ENCODE measurements at regions of chr15 and their contacts with region 1.

Region 1: DNA sequence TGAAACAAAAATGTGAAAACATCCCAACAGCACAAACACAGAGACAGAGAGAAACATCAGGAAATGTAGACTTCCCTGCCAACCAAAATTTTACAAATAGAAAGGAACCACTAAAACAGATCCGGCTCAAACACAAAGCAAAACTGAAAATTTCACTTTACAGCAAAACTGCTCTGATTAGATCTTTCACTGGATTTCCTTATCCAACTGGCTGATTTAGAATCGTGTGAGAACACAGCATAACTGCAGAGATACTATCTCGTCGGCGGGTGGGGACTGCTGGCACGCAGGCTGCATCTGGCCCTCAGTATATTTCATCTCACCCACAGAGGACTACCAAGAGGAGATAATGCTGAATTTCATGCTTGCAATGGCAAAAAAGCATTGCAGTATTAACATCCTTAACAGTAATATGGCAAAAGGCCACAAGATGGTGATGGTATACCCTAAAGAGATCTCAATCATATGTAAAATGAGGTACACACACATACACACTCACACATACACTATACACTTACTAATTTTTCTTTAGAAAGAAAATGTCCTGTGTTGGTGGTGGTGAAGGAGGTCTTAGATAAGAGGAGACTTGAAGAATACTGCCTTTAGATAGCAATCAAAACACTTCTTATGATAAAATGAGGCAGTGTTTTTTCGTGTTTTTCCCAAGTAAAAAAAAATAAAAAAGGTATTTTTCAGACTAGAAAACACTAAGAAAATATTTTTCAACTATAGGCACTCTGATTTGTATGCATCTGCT is 10.6 kb upstream of the LEO1 start:
- DNase-seq: peak; percentile 61 to 72 (median 66)
- H3K4me3 ChIP-seq: no peak overlapping the region
- H3K4me3 Mint-ChIP-seq: peak overlapping the region; percentile 69 to 87 (median 80)
- H3K27ac ChIP-seq: no peak overlapping the region
- H3K27ac Mint-ChIP-seq: peak overlapping the region; percentile 15 to 94 (median 83)
- H3K4me1 ChIP-seq: peaks cover 13% of the 10 kb centered on the region
- H3K4me1 Mint-ChIP-seq: peaks cover 9 to 10% (median 10%) of the 10 kb centered on the region in 4 donors
- H3K27me3 ChIP-seq: no peaks in the 10 kb centered on the region
- H3K27me3 Mint-ChIP-seq: no peaks in the 10 kb centered on the region

Region 2: GRCh38 chr15:51971375-51972133 is 10.6 kb before region 1 on chr15 and contains the start of gene LEO1:
- CTCF ChIA-PET with region 1: interaction called, 7 read pairs
- POLR2A ChIA-PET with region 1: interaction called, 23 read pairs
- intact Hi-C with region 1: loop called (anchors 1 kb)
- DNase-seq: peak; percentile 92 to 95 (median 93)
- H3K4me3 ChIP-seq: peak within 1 kb of the TSS; percentile 93 to 96
- H3K4me3 Mint-ChIP-seq: peak within 1 kb of the TSS; percentile 95 to 100 (median 98)
- H3K27ac ChIP-seq: peak within 1 kb of the TSS; percentile 77
- H3K27ac Mint-ChIP-seq: peak within 1 kb of the TSS; percentile 94 to 99 (median 97)
- H3K4me1 ChIP-seq: peaks cover 18% of the 10 kb centered on the region
- H3K4me1 Mint-ChIP-seq: peaks cover 15 to 23% (median 19%) of the 10 kb centered on the region in 4 donors
- H3K27me3 ChIP-seq: no peaks in the 10 kb centered on the region
- H3K27me3 Mint-ChIP-seq: peaks cover 0 to 1% of the 10 kb centered on the region in 2 donors
- total RNA-seq, gene LEO1: 21.7 to 22.2 TPM

Region 3: DNA sequence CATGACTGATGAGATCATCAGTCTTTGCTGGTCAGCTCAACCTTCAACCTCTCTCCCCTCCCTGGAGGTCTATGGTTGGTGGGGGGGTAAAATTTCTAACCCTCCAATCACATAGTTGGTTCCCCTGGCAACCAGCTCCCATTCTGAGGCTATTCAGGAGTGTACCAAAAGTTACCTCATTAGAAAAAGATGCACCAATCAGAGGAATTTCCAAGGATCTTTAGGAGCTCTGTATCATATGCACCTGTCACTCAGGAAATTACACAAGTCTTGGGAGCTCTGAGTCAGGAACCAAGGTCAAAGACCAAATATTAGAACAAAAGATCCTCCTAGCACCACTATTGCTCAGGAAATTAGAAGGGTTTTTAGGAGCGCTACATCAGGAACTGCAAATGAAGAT is 10.8 kb after region 1 on chr15:
- CTCF ChIA-PET with region 1: no interaction called
- POLR2A ChIA-PET with region 1: no interaction called
- intact Hi-C with region 1: no loop called
- DNase-seq: no peak
- H3K4me3 ChIP-seq: no peak overlapping the region
- H3K4me3 Mint-ChIP-seq: no peak overlapping the region
- H3K27ac ChIP-seq: no peak overlapping the region
- H3K27ac Mint-ChIP-seq: no peak overlapping the region
- H3K4me1 ChIP-seq: no peaks in the 10 kb centered on the region
- H3K4me1 Mint-ChIP-seq: no peaks in the 10 kb centered on the region
- H3K27me3 ChIP-seq: no peaks in the 10 kb centered on the region
- H3K27me3 Mint-ChIP-seq: no peaks in the 10 kb centered on the region

Region 4: GRCh38 chr15:52018693-52019387 is 36.6 kb after region 1 on chr15 and contains the start of gene MAPK6:
- CTCF ChIA-PET with region 1: interaction called, 3 read pairs
- POLR2A ChIA-PET with region 1: no interaction called
- intact Hi-C with region 1: loop called (anchors 1 kb)
- DNase-seq: peak; percentile 91 to 94 (median 94)
- H3K4me3 ChIP-seq: peak within 1 kb of the TSS; percentile 59 to 78
- H3K4me3 Mint-ChIP-seq: peak within 1 kb of the TSS; percentile 94 to 99 (median 97)
- H3K27ac ChIP-seq: peak within 1 kb of the TSS; percentile 89
- H3K27ac Mint-ChIP-seq: peak within 1 kb of the TSS; percentile 98 to 99 (median 98)
- H3K4me1 ChIP-seq: peaks cover 41% of the 10 kb centered on the region
- H3K4me1 Mint-ChIP-seq: peaks cover 25 to 54% (median 38%) of the 10 kb centered on the region in 4 donors
- H3K27me3 ChIP-seq: no peaks in the 10 kb centered on the region
- H3K27me3 Mint-ChIP-seq: no peaks in the 10 kb centered on the region
- total RNA-seq, gene MAPK6: 18.2 to 24.0 TPM

Region 5: GRCh38 chr15:52039925-52040781 is 58.0 kb after region 1 on chr15:
- CTCF ChIA-PET with region 1: interaction called, 11 read pairs
- POLR2A ChIA-PET with region 1: interaction called, 3 read pairs
- intact Hi-C with region 1: loop called (anchors 1 kb)
- DNase-seq: no peak
- H3K4me3 ChIP-seq: no peak overlapping the region
- H3K4me3 Mint-ChIP-seq: peak overlapping the region in 3 of 8 donors; percentile 5 to 33 (median 9)
- H3K27ac ChIP-seq: no peak overlapping the region
- H3K27ac Mint-ChIP-seq: peak overlapping the region; percentile 13 to 86 (median 77)
- H3K4me1 ChIP-seq: peaks cover 48% of the 10 kb centered on the region
- H3K4me1 Mint-ChIP-seq: peaks cover 44 to 67% (median 55%) of the 10 kb centered on the region in 4 donors
- H3K27me3 ChIP-seq: no peaks in the 10 kb centered on the region
- H3K27me3 Mint-ChIP-seq: no peaks in the 10 kb centered on the region

Region 6: DNA sequence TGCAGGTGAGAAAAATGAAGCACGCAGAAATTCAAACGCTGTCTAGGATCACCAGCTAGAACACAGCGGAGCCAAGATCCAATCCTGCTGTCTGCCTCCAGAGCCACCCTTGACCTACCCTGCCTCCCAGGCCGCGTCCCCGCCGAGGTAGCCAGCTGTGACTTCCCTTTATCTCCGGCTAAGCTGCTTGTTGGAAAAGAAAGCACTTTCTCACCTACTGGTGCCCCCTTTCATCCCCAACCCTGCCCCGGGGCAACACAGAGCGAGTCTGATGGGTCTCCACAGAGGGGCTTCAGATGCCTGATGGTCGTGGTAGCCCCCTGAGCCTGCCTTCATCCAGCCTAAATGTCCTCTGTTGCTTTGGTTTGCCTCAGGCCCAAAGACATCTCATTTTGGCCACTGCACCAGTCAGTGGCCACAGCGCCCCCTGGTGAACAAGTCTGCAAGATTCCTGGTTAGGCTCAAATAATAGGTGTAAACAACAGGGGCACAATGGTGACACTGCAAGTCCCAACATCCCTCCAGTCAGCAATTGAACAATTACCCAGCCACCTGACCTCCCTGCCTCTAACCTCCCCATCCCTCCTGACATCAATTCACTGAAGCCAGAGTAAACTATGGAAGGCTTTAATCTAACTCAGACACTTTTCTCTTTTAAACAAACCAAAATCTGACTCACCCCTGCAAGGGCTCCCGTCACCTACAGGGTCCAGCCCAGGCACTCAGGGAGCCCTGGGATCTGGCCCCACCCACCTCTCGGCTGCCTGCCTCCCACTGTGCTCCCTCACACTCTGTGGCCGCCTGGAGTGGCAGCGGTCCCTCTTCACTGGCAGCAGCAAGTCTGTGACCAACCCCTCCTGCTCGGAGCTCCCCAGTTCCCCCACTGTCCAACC is 157.7 kb after region 1 on chr15:
- CTCF ChIA-PET with region 1: interaction called, 5 read pairs
- POLR2A ChIA-PET with region 1: no interaction called
- intact Hi-C with region 1: loop called (anchors 1 kb)
- DNase-seq: peak; percentile 42 to 60 (median 46)
- H3K4me3 ChIP-seq: no peak overlapping the region
- H3K4me3 Mint-ChIP-seq: peak overlapping the region in 1 of 8 donors; percentile 26
- H3K27ac ChIP-seq: no peak overlapping the region
- H3K27ac Mint-ChIP-seq: peak overlapping the region in 4 of 7 donors; percentile 61 to 70 (median 66)
- H3K4me1 ChIP-seq: peaks cover 22% of the 10 kb centered on the region
- H3K4me1 Mint-ChIP-seq: peaks cover 18 to 32% (median 27%) of the 10 kb centered on the region in 4 donors
- H3K27me3 ChIP-seq: no peaks in the 10 kb centered on the region
- H3K27me3 Mint-ChIP-seq: no peaks in the 10 kb centered on the region

Region 7: DNA sequence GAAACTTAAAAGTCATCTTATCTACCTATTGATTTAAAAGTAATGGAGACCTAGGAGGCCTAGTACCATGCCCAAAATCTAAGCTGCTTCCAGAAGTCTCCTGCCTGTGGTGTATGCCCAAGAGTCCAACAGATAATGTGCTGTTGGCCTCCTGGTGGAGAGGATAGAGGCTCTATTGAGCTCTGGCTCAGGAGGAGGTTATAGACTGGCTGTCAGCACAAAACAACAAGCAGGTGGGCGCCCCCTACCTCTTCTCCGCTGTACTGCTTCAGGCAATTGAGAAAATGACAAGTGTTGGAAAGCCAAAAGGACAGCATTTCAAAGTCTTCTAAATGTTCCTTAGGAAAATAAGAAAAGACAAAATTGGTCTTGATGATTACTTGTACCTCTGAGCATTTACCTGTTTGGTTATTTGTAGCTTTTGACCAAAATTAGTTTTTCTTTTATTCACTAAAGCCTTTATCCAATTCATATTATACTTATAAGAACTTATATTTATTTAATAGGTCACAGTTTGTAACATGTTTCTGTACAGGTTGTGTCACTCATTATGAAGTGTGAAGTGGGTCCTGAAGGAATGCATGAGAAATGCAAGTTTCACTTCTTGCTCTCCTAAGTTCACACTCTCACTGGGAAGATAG is 226.2 kb after region 1 on chr15:
- CTCF ChIA-PET with region 1: interaction called, 4 read pairs
- POLR2A ChIA-PET with region 1: no interaction called
- intact Hi-C with region 1: loop called (anchors 1 kb)
- DNase-seq: peak; percentile 69 to 78 (median 72)
- H3K4me3 ChIP-seq: no peak overlapping the region
- H3K4me3 Mint-ChIP-seq: no peak overlapping the region
- H3K27ac ChIP-seq: no peak overlapping the region
- H3K27ac Mint-ChIP-seq: peak overlapping the region in 4 of 7 donors; percentile 43 to 84 (median 66)
- H3K4me1 ChIP-seq: no peaks in the 10 kb centered on the region
- H3K4me1 Mint-ChIP-seq: peaks cover 0 to 4% (median 1%) of the 10 kb centered on the region in 4 donors
- H3K27me3 ChIP-seq: no peaks in the 10 kb centered on the region
- H3K27me3 Mint-ChIP-seq: no peaks in the 10 kb centered on the region

Region 8: DNA sequence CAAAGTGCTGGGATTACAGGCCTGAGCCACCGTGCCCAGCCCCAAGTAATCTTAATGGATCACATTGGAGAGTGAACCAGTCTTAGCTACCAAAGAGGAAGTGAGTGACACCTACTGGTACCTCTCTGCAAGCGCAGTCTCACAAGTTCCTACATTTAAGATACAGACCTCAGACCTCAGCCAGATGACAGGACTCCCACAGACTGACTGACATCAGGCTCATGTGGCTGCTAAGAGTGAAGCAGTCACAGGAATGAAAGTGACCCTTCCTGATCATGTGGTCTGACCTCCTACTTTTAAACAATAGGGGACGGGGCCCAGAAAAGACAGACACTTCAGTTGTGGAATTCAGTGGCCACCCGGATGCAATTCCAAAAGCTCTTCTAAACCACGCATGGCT is 245.3 kb after region 1 on chr15:
- CTCF ChIA-PET with region 1: interaction called, 10 read pairs
- POLR2A ChIA-PET with region 1: no interaction called
- intact Hi-C with region 1: loop called (anchors 1 kb)
- DNase-seq: peak; percentile 68 to 78 (median 69)
- H3K4me3 ChIP-seq: no peak overlapping the region
- H3K4me3 Mint-ChIP-seq: no peak overlapping the region
- H3K27ac ChIP-seq: no peak overlapping the region
- H3K27ac Mint-ChIP-seq: peak overlapping the region in 1 of 7 donors; percentile 60
- H3K4me1 ChIP-seq: peaks cover 8% of the 10 kb centered on the region
- H3K4me1 Mint-ChIP-seq: peaks cover 10 to 21% (median 14%) of the 10 kb centered on the region in 4 donors
- H3K27me3 ChIP-seq: no peaks in the 10 kb centered on the region
- H3K27me3 Mint-ChIP-seq: no peaks in the 10 kb centered on the region